Mammary epithelial cell (primary cell): ENCODE measurements at regions of chr2 and their contacts with region 1.

Region 1: GRCh38 chr2:73746015-73746876 is 9.1 kb upstream of the TPRKB start:
- DNase-seq: no peak
- H3K4me3 ChIP-seq: no peak overlapping the region
- H3K27ac ChIP-seq: no peak overlapping the region
- H3K4me1 ChIP-seq: no peaks in the 10 kb centered on the region
- H3K27me3 ChIP-seq: no peaks in the 10 kb centered on the region
- CTCF ChIP-seq: no peak

Region 2: DNA sequence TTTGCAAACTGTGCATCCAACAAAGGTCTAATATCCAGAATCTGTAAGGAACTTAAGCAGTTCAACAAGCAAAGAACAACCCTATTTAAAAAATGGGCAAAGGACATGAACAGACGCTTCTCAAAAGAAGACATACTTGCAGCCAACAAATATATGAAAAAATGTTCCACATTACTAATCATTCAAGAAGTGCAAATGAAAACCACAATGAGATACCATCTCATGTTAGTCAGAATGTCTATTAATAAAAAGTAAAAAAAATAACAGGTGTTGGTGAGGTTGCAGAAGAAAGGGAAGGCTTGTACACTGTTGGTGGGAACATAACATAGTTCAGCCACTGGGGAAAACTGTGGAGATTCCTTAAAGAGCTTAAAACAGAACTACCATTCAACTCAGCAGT is 230.2 kb before region 1 on chr2:
- CTCF ChIA-PET with region 1: no interaction called
- dilution Hi-C with region 1: no loop called
- in situ Hi-C with region 1: no loop called
- intact Hi-C with region 1: no loop called
- DNase-seq: peak; percentile 81
- H3K4me3 ChIP-seq: no peak overlapping the region
- H3K27ac ChIP-seq: no peak overlapping the region
- H3K4me1 ChIP-seq: peaks cover 7% of the 10 kb centered on the region
- H3K27me3 ChIP-seq: no peaks in the 10 kb centered on the region
- CTCF ChIP-seq: no peak

Region 3: GRCh38 chr2:73759285-73759764 is 13.1 kb after region 1 on chr2:
- CTCF ChIA-PET with region 1: interaction called, 12 read pairs
- dilution Hi-C with region 1: no loop called
- in situ Hi-C with region 1: no loop called
- intact Hi-C with region 1: no loop called
- DNase-seq: no peak
- H3K4me3 ChIP-seq: no peak overlapping the region
- H3K27ac ChIP-seq: no peak overlapping the region
- H3K4me1 ChIP-seq: no peaks in the 10 kb centered on the region
- H3K27me3 ChIP-seq: no peaks in the 10 kb centered on the region
- CTCF ChIP-seq: no peak

Region 4: GRCh38 chr2:73870084-73870483 is 123.8 kb after region 1 on chr2:
- CTCF ChIA-PET with region 1: no interaction called
- dilution Hi-C with region 1: no loop called
- in situ Hi-C with region 1: no loop called
- intact Hi-C with region 1: no loop called
- DNase-seq: peak; percentile 39
- H3K4me3 ChIP-seq: no peak overlapping the region
- H3K27ac ChIP-seq: no peak overlapping the region
- H3K4me1 ChIP-seq: peaks cover 4% of the 10 kb centered on the region
- H3K27me3 ChIP-seq: no peaks in the 10 kb centered on the region
- CTCF ChIP-seq: no peak

Region 5: DNA sequence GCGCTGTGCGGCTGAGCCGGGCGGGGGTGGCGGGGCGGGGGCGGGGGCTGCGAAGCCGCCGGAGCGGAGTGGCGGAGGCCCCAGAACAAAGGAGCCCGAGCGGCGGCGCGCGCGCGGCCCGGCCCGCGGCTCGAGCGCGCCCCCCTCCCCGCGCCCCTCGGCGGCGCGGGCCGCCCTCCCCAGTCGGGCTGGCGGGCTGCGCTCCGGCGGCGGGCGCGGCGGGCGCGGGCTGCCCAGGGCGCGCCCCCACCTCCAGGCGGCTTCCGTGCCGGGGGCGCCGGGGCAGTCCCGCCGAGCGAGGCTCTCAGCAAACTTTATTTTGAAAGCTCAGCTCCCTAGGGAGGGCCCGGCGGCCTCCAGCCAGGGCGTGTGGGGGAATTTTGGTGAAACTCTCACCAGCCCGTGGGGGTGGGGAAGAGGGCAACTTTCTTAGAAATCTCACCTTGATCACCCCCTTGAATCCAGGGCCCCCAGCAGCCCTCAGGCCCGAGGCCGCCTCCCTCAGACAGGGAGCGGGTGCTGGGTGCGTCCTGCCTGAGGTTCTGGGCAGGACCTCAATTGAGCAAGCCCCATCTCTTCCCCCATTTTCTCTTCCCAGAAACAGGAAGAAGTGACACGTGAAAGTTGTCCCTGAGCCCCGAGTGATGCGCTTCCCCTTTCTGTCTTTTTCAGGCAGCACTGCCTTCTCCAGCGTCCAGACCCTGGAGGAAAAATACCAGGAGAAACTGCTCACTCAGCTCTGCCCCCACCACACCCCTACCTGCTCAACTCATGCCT is 239.2 kb after region 1 on chr2:
- CTCF ChIA-PET with region 1: no interaction called
- dilution Hi-C with region 1: no loop called
- in situ Hi-C with region 1: no loop called
- intact Hi-C with region 1: no loop called
- DNase-seq: no peak
- H3K4me3 ChIP-seq: peak overlapping the region; percentile 40 to 71 (median 46)
- H3K27ac ChIP-seq: peak overlapping the region; percentile 45
- H3K4me1 ChIP-seq: peaks cover 62% of the 10 kb centered on the region
- H3K27me3 ChIP-seq: no peaks in the 10 kb centered on the region
- CTCF ChIP-seq: no peak